ENCODE measurements at regions of chr6 and their contacts with region 1.

Region 1: DNA sequence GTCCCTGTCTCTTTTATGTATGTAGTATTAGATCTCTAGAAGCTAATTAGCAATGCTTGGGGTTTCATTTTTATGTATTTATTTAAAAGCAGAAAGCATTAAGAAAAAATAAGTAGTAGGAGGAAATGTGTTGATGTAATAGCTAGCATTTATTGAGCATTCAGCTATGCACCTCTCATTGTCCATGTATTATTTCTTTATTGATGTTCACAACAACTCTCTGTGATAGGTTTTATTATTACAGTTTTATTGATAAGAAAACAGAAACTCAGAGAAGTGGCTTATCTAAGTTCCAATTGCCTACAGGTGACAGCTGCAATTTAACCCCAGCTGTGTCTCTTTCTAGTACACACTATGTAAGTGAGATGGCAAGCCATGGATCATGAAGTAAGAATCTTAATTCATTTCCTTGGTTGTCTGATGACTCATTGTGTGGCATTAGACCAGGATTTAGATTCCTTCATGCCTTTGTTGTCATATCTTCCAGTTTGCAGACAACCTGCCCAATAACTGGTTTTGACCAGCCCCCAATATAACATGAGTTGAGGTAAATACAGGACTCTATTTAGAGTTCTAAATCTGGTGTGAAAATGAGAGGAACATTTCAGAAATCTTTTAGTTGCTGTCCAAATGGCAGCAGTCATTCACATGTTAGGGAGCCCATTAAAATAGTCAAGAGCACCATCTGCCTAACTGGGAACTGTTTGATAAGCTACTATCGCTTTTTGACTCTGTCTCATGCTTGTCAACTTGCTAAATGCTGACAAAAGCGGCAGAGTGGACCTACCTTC is 170.8 kb upstream of the PHACTR1 start:
- DNase-seq: peak; percentile 27
- H3K4me3 Mint-ChIP-seq: no peak overlapping the region
- H3K27ac Mint-ChIP-seq: peak overlapping the region; percentile 83
- H3K4me1 Mint-ChIP-seq: peaks cover 35% of the 10 kb centered on the region
- H3K27me3 Mint-ChIP-seq: no peaks in the 10 kb centered on the region
- CTCF ChIP-seq: no peak

Region 2: DNA sequence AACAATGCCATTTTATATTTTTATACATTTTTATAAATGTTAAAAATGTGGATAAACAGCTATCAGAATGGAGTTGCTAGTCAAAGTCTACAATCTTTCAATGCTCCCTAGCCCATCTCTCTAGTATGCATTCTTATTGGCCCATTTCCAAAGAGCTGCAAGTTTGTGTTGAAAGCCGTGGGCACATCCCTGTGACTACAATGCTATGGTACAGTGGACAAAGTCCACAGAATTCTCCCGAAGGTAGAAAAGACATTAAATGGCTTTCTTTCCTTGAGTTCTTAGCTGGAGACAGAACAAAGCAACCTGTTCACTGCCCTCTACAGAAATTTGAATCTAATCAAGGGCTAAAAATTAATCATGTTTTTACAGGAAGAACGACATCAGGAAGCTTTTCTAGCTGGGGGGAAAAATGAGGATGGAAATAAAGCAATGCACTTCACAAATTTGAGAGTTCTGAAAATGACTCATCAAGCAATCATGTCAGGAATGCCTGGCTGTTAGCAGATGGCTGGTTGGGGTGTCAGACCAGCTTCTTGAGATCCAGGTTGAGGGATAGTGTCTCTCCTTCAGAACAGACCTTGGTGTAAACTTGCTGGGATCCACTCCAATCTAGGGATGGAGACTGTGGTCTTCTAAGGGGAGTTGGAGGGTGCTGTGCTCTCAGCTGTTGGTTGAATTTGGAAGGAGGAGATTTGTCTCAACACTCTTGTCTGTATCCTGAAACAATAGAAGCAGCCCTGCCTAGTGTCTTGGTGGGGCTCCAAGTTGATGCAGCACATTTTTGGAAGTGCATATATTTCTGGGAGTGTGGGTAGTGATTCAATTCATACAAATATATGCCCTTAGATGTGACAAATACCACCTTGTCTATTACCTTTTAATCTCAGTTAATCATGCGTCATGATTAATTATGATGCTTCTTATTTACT is 27.3 kb after region 1 on chr6:
- CTCF ChIA-PET with region 1: no interaction called
- intact Hi-C with region 1: loop called (anchors 2 kb)
- DNase-seq: peak; percentile 53
- H3K4me3 Mint-ChIP-seq: no peak overlapping the region
- H3K27ac Mint-ChIP-seq: peak overlapping the region; percentile 52
- H3K4me1 Mint-ChIP-seq: peaks cover 60% of the 10 kb centered on the region
- H3K27me3 Mint-ChIP-seq: no peaks in the 10 kb centered on the region
- CTCF ChIP-seq: no peak

Measured in Calu3 (cell line).